MCF 10A (cell line): ENCODE measurements at regions of chr5 and their contacts with region 1.

Region 1: GRCh38 chr5:149228618-149229297 is 42.9 kb upstream of the AFAP1L1 start:
- DNase-seq: peak; percentile 84
- H3K4me3 Mint-ChIP-seq: peak overlapping the region; percentile 0
- H3K27ac Mint-ChIP-seq: peak overlapping the region; percentile 73
- H3K4me1 Mint-ChIP-seq: peaks cover 6% of the 10 kb centered on the region
- H3K27me3 Mint-ChIP-seq: no peaks in the 10 kb centered on the region
- CTCF ChIP-seq: peak; percentile 83

Region 2: GRCh38 chr5:149141224-149141956 is 87.4 kb before region 1 on chr5 and contains the start of gene ABLIM3:
- CTCF ChIA-PET with region 1: interaction called, 426 read pairs
- POLR2A ChIA-PET with region 1: interaction called, 12 read pairs
- intact Hi-C with region 1: loop called (anchors 1 kb)
- DNase-seq: peak; percentile 85
- H3K4me3 Mint-ChIP-seq: peak within 1 kb of the TSS; percentile 82
- H3K27ac Mint-ChIP-seq: peak within 1 kb of the TSS; percentile 78
- H3K4me1 Mint-ChIP-seq: peaks cover 51% of the 10 kb centered on the region
- H3K27me3 Mint-ChIP-seq: no peaks in the 10 kb centered on the region
- CTCF ChIP-seq: peak; percentile 99
- total RNA-seq, gene ABLIM3: 168 and 206 TPM in 2 replicates

Region 3: DNA sequence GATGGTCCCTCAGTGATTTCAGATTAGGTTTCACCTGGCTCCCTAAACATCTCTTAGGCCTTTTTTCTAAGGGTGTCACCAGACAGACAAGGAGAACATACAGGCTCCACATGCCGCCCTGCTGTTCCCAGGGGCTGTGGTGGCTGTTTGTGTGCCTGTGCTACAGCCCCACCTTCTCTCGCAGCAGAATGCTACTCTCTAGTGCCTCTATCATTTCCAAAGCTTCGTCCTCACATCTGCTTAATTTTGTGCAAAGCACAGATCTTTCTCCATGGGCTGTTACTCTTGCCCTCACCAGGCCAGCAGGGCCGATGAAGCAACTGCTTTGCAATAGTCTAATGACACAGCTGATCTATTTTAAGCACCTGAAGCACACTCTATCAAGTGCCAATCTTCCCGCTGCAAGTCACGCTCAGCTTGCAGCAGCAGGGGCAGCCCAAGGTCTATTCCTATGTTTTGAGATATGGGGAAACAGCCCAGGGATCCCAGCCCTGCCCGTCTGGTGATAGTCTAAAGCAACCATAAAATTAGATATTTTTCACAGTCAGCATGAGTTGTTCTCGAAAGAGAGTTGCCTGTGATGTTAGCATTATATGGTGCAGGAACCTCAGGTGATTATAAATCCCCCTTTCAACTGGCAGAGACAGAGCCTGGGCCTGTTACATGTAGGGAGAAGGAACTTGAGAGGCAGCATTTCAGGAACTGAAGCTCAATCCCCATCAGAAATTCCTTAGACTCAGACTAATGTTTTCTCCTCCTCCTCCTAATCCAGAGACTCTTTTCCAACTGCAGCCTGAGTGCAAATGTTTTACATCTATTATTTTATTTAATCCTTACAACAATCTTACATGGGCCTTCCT is 74.8 kb before region 1 on chr5:
- CTCF ChIA-PET with region 1: interaction called, 29 read pairs
- POLR2A ChIA-PET with region 1: interaction called, 3 read pairs
- intact Hi-C with region 1: no loop called
- DNase-seq: peak; percentile 87
- H3K4me3 Mint-ChIP-seq: peak overlapping the region; percentile 3
- H3K27ac Mint-ChIP-seq: peak overlapping the region; percentile 81
- H3K4me1 Mint-ChIP-seq: peaks cover 61% of the 10 kb centered on the region
- H3K27me3 Mint-ChIP-seq: no peaks in the 10 kb centered on the region
- CTCF ChIP-seq: no peak

Region 4: GRCh38 chr5:149162401-149163084 is 66.2 kb before region 1 on chr5:
- CTCF ChIA-PET with region 1: interaction called, 29 read pairs
- POLR2A ChIA-PET with region 1: no interaction called
- intact Hi-C with region 1: no loop called
- DNase-seq: peak; percentile 77
- H3K4me3 Mint-ChIP-seq: no peak overlapping the region
- H3K27ac Mint-ChIP-seq: peak overlapping the region; percentile 83
- H3K4me1 Mint-ChIP-seq: peaks cover 69% of the 10 kb centered on the region
- H3K27me3 Mint-ChIP-seq: no peaks in the 10 kb centered on the region
- CTCF ChIP-seq: no peak

Region 5: DNA sequence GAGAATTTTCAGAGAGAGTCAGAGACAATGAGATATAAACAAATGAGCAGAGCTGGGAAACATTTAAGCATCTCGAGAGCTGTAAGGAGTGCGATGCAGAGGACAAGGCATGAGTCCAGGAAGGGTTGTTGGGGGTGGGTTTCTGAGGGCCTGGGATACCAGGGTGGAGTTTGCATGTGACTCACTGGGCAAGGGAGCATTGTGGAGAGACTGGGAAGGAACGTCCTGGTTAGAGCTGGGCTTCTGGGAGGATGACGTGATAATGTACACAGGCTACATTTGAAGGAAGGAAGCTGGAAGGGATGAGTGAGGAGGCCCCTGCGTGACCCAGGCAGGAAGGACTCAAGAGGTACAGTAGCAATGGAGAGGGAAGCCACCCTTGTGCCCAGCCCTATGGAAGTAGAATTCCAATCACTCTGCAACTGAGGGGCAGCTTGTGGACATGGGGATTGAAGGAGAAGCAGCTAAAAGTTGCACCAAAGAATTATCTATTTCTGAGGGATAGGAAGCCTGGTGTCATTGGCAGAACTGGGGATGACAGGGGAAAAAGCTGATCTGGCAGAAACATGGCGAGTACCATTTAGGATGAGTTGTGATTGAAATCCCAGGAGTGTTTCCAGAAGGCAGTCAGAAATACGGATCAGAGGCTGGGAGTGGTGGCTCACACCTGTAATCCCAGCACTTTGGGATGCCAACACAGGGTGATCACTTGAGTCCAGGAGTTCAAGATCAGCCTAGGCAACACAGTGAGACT is 16.4 kb before region 1 on chr5:
- CTCF ChIA-PET with region 1: interaction called, 38 read pairs
- POLR2A ChIA-PET with region 1: interaction called, 4 read pairs
- intact Hi-C with region 1: no loop called
- DNase-seq: no peak
- H3K4me3 Mint-ChIP-seq: no peak overlapping the region
- H3K27ac Mint-ChIP-seq: peak overlapping the region; percentile 10
- H3K4me1 Mint-ChIP-seq: peaks cover 7% of the 10 kb centered on the region
- H3K27me3 Mint-ChIP-seq: no peaks in the 10 kb centered on the region
- CTCF ChIP-seq: no peak

Region 6: GRCh38 chr5:149254506-149254905 is 25.7 kb after region 1 on chr5:
- CTCF ChIA-PET with region 1: interaction called, 14 read pairs
- POLR2A ChIA-PET with region 1: interaction called, 3 read pairs
- intact Hi-C with region 1: no loop called
- DNase-seq: peak; percentile 43
- H3K4me3 Mint-ChIP-seq: no peak overlapping the region
- H3K27ac Mint-ChIP-seq: peak overlapping the region; percentile 10
- H3K4me1 Mint-ChIP-seq: peaks cover 13% of the 10 kb centered on the region
- H3K27me3 Mint-ChIP-seq: no peaks in the 10 kb centered on the region
- CTCF ChIP-seq: no peak

Region 7: DNA sequence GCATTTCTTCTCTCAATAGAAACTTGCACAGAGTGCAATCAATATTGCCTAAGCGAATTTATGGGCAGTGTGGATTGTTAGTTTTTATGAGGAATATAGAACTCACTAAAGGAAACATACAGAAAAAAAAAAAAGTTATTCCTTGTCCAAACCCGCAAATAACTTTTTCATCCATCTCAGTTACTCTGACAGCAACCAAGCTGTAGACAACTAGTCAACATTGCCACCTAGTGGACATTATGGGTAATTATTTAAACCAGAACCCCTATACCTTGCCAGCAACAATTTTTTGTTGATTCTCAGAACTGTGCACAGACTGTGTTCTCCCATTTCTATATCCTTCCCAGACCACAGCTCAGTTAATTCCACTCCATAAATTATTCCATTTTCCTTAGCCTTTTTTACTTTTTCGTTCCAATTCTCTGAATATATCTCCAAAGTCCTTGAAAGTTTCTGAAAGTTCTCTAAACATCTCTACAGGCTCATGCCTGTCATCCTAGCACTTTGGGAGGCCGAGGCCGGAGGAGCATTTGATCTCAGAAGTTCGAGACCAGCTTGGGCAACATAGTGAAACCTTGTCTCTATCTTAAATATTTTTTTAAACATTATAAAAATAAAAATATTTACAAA is 40.3 kb after region 1 on chr5:
- CTCF ChIA-PET with region 1: interaction called, 28 read pairs
- POLR2A ChIA-PET with region 1: no interaction called
- intact Hi-C with region 1: no loop called
- DNase-seq: peak; percentile 84
- H3K4me3 Mint-ChIP-seq: no peak overlapping the region
- H3K27ac Mint-ChIP-seq: no peak overlapping the region
- H3K4me1 Mint-ChIP-seq: peaks cover 14% of the 10 kb centered on the region
- H3K27me3 Mint-ChIP-seq: no peaks in the 10 kb centered on the region
- CTCF ChIP-seq: peak; percentile 91